Activated CD4-positive, alpha-beta memory T cell treated with anti-CD3 and anti-CD28 coated beads, Interleukin-2, amount 10 ng/mL, durations not matched to agents 7 days and 5 days (primary cell): ENCODE measurements at regions of chr19 and their contacts with region 1.

Region 1: GRCh38 chr19:3176603-3177501 is 1.7 kb upstream of the S1PR4 start:
- DNase-seq: peak; percentile 86
- H3K4me3 Mint-ChIP-seq: peak overlapping the region; percentile 76
- H3K27ac Mint-ChIP-seq: peak overlapping the region; percentile 94
- H3K4me1 Mint-ChIP-seq: peaks cover 26% of the 10 kb centered on the region
- H3K27me3 Mint-ChIP-seq: no peaks in the 10 kb centered on the region

Region 2: GRCh38 chr19:2750808-2751443 is 425.9 kb before region 1 on chr19:
- CTCF ChIA-PET with region 1: no interaction called
- POLR2A ChIA-PET with region 1: no interaction called
- DNase-seq: no peak
- H3K4me3 Mint-ChIP-seq: no peak overlapping the region
- H3K27ac Mint-ChIP-seq: no peak overlapping the region
- H3K4me1 Mint-ChIP-seq: peaks cover 1% of the 10 kb centered on the region
- H3K27me3 Mint-ChIP-seq: no peaks in the 10 kb centered on the region

Region 3: GRCh38 chr19:3142292-3142670 is 34.6 kb before region 1 on chr19:
- CTCF ChIA-PET with region 1: interaction called, 3 read pairs
- POLR2A ChIA-PET with region 1: interaction called, 10 read pairs
- DNase-seq: no peak
- H3K4me3 Mint-ChIP-seq: peak overlapping the region; percentile 21
- H3K27ac Mint-ChIP-seq: peak overlapping the region; percentile 61
- H3K4me1 Mint-ChIP-seq: peaks cover 56% of the 10 kb centered on the region
- H3K27me3 Mint-ChIP-seq: no peaks in the 10 kb centered on the region

Region 4: GRCh38 chr19:3253270-3253669 is 76.4 kb after region 1 on chr19:
- CTCF ChIA-PET with region 1: no interaction called
- POLR2A ChIA-PET with region 1: no interaction called
- DNase-seq: no peak
- H3K4me3 Mint-ChIP-seq: no peak overlapping the region
- H3K27ac Mint-ChIP-seq: no peak overlapping the region
- H3K4me1 Mint-ChIP-seq: no peaks in the 10 kb centered on the region
- H3K27me3 Mint-ChIP-seq: no peaks in the 10 kb centered on the region

Region 5: DNA sequence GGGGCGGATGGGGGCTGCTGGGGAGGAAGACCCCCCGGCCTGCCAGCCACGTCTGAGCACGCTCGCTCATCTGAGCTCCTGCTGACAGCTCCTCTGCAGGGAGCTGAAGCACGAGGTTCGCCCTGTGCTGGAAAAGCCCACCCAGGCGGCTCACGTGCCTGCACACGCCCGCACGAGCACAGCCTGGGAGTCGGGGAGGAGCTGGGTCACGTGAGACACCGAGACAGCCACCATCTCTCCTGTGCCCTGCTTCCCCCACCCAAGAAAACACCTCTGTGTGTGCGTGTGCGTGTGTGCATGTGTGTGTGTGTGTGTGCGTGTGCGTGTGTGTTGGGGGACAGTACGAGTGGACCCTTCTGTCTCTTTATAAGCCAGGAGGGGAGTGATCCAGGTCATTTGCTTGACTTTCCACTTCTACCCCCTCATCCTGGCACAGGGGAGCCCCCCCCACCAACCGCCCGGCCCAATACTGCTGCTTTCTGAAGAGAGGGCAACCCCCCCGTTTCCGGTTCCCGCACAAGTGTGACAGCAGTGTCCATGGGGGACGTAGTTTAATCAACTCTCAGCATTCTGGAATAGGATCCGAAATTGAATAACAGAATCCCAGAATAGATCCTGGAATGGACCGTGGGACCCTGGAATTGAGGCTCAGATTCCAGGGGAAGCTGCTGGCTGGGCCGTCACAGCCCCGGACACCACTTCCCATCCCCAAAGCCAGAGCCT is 90.1 kb after region 1 on chr19:
- CTCF ChIA-PET with region 1: no interaction called
- POLR2A ChIA-PET with region 1: no interaction called
- DNase-seq: no peak
- H3K4me3 Mint-ChIP-seq: no peak overlapping the region
- H3K27ac Mint-ChIP-seq: no peak overlapping the region
- H3K4me1 Mint-ChIP-seq: no peaks in the 10 kb centered on the region
- H3K27me3 Mint-ChIP-seq: peaks cover 27% of the 10 kb centered on the region

Region 6: GRCh38 chr19:3284759-3285646 is 108.2 kb after region 1 on chr19:
- CTCF ChIA-PET with region 1: no interaction called
- POLR2A ChIA-PET with region 1: no interaction called
- DNase-seq: peak; percentile 69
- H3K4me3 Mint-ChIP-seq: no peak overlapping the region
- H3K27ac Mint-ChIP-seq: no peak overlapping the region
- H3K4me1 Mint-ChIP-seq: peaks cover 7% of the 10 kb centered on the region
- H3K27me3 Mint-ChIP-seq: peaks cover 6% of the 10 kb centered on the region